Activated CD4-positive, alpha-beta memory T cell treated with anti-CD3 and anti-CD28 coated beads, Interleukin-2, amount 10 ng/mL, durations not matched to agents 7 days and 5 days (primary cell): ENCODE measurements at regions of chr1 and their contacts with region 1.

Region 1: GRCh38 chr1:212665241-212666115 is 34.2 kb downstream of the BATF3 start:
- DNase-seq: peak; percentile 85
- H3K4me3 Mint-ChIP-seq: peak overlapping the region; percentile 74
- H3K27ac Mint-ChIP-seq: peak overlapping the region; percentile 71
- H3K4me1 Mint-ChIP-seq: peaks cover 47% of the 10 kb centered on the region
- H3K27me3 Mint-ChIP-seq: peaks cover 9% of the 10 kb centered on the region

Region 2: DNA sequence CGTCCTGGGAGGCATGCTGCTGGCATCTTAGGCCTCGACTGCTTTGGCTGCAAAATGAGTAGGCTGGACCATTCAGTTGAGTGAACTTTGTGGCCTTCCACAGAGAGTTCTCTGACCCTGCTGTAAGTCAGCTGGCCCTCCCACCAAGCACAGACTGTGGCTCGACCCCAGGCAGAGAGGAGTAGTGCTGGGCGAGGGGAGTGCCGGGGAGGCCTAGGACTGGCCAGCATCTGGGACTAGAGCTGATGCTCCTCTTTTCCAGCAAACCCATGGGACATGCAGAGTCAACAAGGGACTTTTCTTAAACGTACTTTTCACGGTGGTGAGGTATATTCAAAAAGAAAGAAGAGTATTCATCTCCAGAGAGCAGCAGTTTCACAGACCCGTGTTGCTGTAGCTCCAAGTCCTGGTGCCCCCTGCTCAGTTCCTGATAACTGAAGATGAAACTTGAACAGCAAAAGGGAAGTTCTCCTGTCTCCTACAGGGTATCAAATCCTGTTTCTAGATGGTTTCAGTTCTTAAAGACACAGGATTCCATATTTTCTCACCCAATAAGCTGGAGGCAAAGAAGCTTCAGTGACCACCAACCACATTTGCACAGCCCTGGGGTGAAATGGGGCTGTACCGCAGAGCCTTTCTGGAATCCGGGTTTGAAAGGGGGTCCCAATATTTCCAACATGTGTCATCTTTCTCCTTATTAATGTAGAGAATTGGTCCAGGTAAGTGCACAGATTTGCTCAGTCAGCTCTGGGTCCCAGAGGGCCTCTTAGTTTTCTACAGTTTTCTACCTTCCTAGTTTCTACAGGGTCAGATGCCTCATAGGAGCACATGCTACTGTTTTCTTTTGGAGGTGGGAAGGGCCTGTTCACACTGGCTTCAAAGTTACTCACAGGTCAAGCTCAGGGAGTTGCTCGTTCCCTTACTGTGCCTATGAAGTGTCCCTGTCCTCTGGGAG is 13.3 kb after region 1 on chr1:
- CTCF ChIA-PET with region 1: interaction called, 33 read pairs
- POLR2A ChIA-PET with region 1: interaction called, 12 read pairs
- DNase-seq: no peak
- H3K4me3 Mint-ChIP-seq: no peak overlapping the region
- H3K27ac Mint-ChIP-seq: peak overlapping the region; percentile 71
- H3K4me1 Mint-ChIP-seq: peaks cover 59% of the 10 kb centered on the region
- H3K27me3 Mint-ChIP-seq: no peaks in the 10 kb centered on the region

Region 3: DNA sequence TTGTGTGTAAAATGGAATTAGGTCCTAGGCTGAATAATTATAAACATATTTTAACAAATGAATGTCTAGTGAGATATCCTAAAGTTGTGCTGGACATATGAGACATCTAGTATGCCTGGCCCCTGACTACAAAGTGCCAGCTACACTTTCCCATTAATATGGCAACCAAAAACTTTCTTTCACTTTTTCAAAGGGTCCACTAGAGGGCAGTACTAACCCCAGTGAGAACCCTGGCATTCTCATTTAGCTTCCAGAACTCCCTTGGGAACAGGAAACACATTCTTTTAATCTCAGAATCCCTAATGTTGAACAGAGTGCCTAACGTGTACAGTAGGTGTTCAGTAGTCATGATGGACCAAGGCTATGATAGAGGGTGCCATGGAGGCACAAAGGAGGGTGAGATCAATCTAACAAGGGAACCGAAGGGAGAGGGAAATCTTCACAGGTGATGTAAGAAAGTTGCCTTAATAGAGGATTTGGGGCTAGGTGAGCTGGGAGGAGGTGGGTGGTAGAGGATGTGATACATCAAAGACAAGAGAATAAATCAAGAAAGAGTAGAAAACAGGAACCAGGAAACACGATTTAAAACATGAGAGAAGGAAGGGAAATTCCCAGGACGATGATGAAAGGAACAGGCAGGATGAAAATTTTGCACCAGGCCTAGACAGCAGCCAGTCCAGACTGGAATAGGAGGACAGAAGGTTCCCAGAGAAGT is 84.5 kb after region 1 on chr1:
- CTCF ChIA-PET with region 1: interaction called, 40 read pairs
- POLR2A ChIA-PET with region 1: no interaction called
- DNase-seq: no peak
- H3K4me3 Mint-ChIP-seq: no peak overlapping the region
- H3K27ac Mint-ChIP-seq: peak overlapping the region; percentile 11
- H3K4me1 Mint-ChIP-seq: peaks cover 45% of the 10 kb centered on the region
- H3K27me3 Mint-ChIP-seq: no peaks in the 10 kb centered on the region

Region 4: GRCh38 chr1:212777151-212777550 is 111.7 kb after region 1 on chr1:
- CTCF ChIA-PET with region 1: interaction called, 90 read pairs
- POLR2A ChIA-PET with region 1: no interaction called
- DNase-seq: no peak
- H3K4me3 Mint-ChIP-seq: no peak overlapping the region
- H3K27ac Mint-ChIP-seq: no peak overlapping the region
- H3K4me1 Mint-ChIP-seq: peaks cover 2% of the 10 kb centered on the region
- H3K27me3 Mint-ChIP-seq: no peaks in the 10 kb centered on the region

Region 5: DNA sequence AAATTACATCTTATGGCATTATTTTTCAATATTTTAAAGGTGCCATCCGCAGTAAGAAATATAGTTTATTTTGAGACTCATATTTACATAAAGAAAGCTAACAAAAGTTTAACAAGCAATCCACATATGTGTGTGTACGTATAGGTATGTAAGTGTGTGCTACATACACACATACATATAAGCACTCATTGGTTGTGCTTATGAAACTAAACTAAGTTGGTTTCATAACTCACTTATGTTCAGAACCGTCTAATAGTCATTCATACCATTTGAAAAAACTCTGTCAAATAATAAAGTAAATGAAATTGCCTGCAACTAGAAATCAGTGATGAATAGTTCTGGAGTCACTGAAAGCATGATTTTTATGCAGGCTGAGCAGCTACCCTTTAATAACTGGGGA is 140.3 kb after region 1 on chr1:
- CTCF ChIA-PET with region 1: interaction called, 10 read pairs
- POLR2A ChIA-PET with region 1: no interaction called
- DNase-seq: no peak
- H3K4me3 Mint-ChIP-seq: no peak overlapping the region
- H3K27ac Mint-ChIP-seq: no peak overlapping the region
- H3K4me1 Mint-ChIP-seq: no peaks in the 10 kb centered on the region
- H3K27me3 Mint-ChIP-seq: no peaks in the 10 kb centered on the region

Region 6: GRCh38 chr1:212884592-212884991 is 219.1 kb after region 1 on chr1:
- CTCF ChIA-PET with region 1: no interaction called
- POLR2A ChIA-PET with region 1: no interaction called
- DNase-seq: no peak
- H3K4me3 Mint-ChIP-seq: no peak overlapping the region
- H3K27ac Mint-ChIP-seq: no peak overlapping the region
- H3K4me1 Mint-ChIP-seq: no peaks in the 10 kb centered on the region
- H3K27me3 Mint-ChIP-seq: no peaks in the 10 kb centered on the region